Transverse colon (tissue), 4 donors: ENCODE measurements at regions of chr15 and their contacts with region 1.

Region 1: GRCh38 chr15:39686000-39686613 is 96.5 kb downstream of the FSIP1 start:
- DNase-seq: peak; percentile 31
- H3K4me3 ChIP-seq: no peak overlapping the region
- H3K27ac ChIP-seq: no peak overlapping the region
- H3K4me1 ChIP-seq: peaks cover 3 to 10% (median 5%) of the 10 kb centered on the region in 4 donors
- H3K27me3 ChIP-seq: no peaks in the 10 kb centered on the region
- CTCF ChIP-seq: peak; percentile 78 to 88 (median 82)
- EP300 ChIP-seq: no peak
- POLR2A ChIP-seq: no peak

Region 2: DNA sequence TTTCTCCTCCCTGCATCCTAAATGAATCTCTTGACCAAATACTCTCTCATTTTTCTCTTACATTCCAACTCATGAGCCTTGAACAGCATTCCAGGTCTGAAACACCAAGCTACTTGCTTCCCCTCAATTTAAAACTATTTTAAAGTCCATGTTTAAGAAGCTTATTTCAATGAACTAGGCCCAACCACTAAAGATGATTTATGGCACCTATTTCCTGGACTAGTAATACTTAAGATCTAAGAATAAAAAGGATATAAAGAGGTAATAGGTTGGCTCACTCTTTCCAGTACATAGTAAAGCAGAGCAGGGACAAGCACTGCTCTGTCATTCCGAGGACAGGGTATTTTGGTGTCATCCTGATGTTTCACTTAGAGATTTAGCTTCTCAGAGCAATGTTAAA is 1971.0 kb before region 1 on chr15:
- in situ Hi-C with region 1: no loop called
- intact Hi-C with region 1: no loop called
- DNase-seq: no peak
- H3K4me3 ChIP-seq: no peak overlapping the region
- H3K27ac ChIP-seq: no peak overlapping the region
- H3K4me1 ChIP-seq: no peaks in the 10 kb centered on the region
- H3K27me3 ChIP-seq: no peaks in the 10 kb centered on the region
- CTCF ChIP-seq: no peak
- EP300 ChIP-seq: no peak
- POLR2A ChIP-seq: no peak

Region 3: DNA sequence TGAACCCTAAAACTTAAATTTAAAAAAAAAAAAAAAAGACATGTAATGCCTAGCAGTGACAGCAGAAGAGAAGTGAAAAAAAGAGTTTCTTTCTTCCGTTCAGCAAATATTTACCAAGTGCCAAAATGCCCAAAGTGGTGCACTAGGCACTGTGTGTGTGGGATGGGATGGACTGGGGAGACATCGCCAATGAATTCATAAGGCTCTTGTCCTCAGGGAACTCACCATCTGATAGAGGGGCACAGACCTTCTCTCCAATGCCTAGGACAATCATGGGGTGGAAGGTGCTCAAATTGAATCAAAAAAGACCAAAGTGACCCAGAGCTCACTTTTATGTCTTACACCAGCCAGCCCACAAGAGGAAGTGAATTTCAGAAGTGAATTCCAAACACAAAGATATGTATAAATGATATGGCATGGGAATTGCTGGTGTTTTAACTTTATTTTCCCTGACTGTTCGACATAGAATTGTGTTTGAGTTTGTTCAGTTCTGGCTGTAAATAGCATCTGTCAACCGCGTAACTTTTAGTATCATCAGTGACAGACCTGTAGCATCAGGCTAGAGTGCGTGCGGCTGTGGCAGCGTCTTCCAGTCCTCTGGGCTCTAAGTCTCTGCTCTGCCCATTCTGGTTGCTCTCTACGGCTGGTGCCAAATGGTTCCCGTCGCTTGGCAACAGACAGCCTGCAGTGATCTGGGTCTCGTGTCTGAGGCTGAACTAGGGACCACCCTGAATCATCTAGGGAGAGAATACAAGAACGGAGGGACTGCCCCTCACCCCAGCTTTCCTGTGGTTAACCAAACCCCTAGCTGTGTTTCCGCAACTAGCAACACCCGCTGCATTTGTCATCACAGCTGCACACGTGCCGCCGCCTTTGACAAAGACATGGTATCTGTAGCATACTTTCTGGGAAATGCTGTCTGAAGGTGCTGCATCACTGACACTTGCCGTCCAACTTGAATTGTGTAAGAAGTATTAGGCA is 259.3 kb before region 1 on chr15:
- in situ Hi-C with region 1: no loop called
- intact Hi-C with region 1: no loop called
- DNase-seq: peak; percentile 38
- H3K4me3 ChIP-seq: no peak overlapping the region
- H3K27ac ChIP-seq: peak overlapping the region in 1 of 4 donors; percentile 30
- H3K4me1 ChIP-seq: peaks cover 0 to 9% (median 8%) of the 10 kb centered on the region in 4 donors
- H3K27me3 ChIP-seq: no peaks in the 10 kb centered on the region
- CTCF ChIP-seq: no peak
- EP300 ChIP-seq: peak; percentile 58
- POLR2A ChIP-seq: no peak

Region 4: DNA sequence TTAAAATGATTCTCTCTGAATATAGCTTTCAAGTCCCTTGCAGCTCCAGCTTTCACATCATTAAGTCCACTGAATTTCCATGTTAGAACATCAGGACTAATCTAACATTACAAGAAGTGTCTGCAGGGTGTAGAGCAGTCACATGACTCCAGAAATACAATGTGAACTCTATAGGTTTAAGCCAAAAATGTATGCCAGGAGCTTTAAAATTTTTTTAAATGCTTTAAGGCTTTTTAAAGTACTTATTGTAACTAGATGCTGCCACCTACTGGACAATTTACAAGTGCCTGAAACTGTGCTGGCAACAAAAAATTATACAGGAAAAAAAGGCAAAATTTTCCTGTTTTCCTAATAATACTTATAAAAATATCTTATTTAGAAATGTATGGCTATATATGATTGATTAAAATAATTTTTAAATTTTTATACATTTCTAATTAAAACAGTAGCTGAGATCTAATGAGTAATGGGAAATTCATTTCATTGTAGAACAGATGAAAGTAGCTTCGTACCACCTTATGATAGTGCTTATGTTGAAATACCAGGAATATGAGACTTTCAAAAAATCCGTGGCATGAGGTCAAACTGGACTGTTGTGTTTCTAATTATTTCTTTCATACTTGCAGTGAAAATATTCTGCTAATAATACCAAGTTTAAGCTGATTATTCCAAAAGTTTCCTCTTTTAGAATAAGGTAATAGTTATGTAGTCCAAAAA is 70.9 kb after region 1 on chr15:
- in situ Hi-C with region 1: no loop called
- intact Hi-C with region 1: loop called (anchors 2 kb)
- DNase-seq: no peak
- H3K4me3 ChIP-seq: no peak overlapping the region
- H3K27ac ChIP-seq: no peak overlapping the region
- H3K4me1 ChIP-seq: peaks cover 0 to 6% (median 2%) of the 10 kb centered on the region in 4 donors
- H3K27me3 ChIP-seq: no peaks in the 10 kb centered on the region
- CTCF ChIP-seq: peak; percentile 71 to 93 (median 85)
- EP300 ChIP-seq: no peak
- POLR2A ChIP-seq: no peak

Region 5: DNA sequence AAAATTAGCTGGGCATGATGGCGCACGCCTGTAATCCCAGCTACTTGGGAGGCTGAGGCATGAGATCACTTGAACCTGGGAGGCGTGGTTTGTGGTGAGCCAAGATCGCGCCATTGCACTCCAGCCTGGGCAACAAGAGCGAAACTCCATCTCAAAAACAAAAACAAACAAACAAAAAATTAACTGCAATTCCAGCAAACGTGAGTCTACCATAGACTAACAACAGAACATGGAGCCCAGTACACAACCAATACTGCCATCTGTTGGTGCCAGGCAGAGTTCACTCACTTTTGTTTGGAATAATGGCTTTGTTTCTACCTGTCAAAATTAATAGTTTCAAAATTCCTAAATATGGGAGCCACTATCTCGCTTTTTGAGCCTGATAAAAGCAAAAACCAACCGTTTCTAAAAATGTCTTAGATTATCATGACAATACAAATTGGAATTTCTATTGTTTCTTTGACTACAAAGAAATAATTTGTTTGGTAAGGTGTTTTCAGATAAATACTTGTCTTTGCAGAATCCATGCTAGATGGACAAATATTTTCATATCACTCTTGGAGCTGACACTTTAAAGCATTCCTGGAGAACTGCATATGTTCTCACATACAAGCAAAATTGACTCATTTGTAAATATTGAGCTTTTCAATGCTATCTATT is 188.9 kb after region 1 on chr15:
- in situ Hi-C with region 1: no loop called
- intact Hi-C with region 1: no loop called
- DNase-seq: peak; percentile 35
- H3K4me3 ChIP-seq: no peak overlapping the region
- H3K27ac ChIP-seq: no peak overlapping the region
- H3K4me1 ChIP-seq: peaks cover 0 to 2% (median 0%) of the 10 kb centered on the region in 4 donors
- H3K27me3 ChIP-seq: no peaks in the 10 kb centered on the region
- CTCF ChIP-seq: peak; percentile 47 to 68 (median 63)
- EP300 ChIP-seq: no peak
- POLR2A ChIP-seq: no peak

Region 6: DNA sequence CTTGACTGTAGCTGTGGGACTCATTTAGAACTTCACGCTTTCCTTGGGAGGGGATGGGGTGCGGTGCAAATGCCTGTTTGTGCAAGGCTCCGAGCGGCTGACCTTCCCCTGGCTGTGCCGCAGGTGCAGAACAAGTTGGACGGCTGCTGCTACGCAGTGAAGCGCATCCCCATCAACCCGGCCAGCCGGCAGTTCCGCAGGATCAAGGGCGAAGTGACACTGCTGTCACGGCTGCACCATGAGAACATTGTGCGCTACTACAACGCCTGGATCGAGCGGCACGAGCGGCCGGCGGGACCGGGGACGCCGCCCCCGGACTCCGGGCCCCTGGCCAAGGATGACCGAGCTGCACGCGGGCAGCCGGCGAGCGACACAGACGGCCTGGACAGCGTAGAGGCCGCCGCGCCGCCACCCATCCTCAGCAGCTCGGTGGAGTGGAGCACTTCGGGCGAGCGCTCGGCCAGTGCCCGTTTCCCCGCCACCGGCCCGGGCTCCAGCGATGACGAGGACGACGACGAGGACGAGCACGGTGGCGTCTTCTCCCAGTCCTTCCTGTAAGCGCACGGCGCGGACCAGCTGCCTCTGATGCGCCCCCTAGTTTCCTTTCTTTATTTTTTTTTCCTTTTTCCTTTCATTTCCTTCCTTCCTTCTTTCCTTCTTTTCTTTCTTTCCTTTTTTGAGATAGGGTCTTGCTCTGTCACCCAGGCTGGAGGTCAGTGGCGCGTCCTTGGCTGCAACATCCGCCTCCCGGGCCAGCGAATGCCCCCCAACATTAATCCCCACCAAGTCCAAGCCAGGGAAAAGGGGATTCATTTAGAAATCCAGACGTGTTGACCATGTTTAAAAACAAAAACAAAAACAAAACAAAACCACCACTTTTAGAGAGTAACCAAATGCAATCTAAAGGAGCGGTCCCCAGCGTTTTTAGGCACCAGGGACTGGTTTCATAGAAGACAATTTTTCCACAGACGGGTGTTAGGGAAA is 290.5 kb after region 1 on chr15:
- in situ Hi-C with region 1: no loop called
- intact Hi-C with region 1: loop called (anchors 10 kb)
- DNase-seq: peak; percentile 51
- H3K4me3 ChIP-seq: peak overlapping the region; percentile 33 to 65 (median 44)
- H3K27ac ChIP-seq: peak overlapping the region; percentile 67 to 83 (median 78)
- H3K4me1 ChIP-seq: peaks cover 0 to 3% (median 1%) of the 10 kb centered on the region in 4 donors
- H3K27me3 ChIP-seq: no peaks in the 10 kb centered on the region
- CTCF ChIP-seq: peak; percentile 47 to 64 (median 52)
- EP300 ChIP-seq: no peak
- POLR2A ChIP-seq: no peak